Activated CD4-positive, alpha-beta T cell treated with anti-CD3 and anti-CD28 coated beads for 36 hours (primary cell): ENCODE measurements at regions of chr2 and their contacts with region 1.

Region 1: DNA sequence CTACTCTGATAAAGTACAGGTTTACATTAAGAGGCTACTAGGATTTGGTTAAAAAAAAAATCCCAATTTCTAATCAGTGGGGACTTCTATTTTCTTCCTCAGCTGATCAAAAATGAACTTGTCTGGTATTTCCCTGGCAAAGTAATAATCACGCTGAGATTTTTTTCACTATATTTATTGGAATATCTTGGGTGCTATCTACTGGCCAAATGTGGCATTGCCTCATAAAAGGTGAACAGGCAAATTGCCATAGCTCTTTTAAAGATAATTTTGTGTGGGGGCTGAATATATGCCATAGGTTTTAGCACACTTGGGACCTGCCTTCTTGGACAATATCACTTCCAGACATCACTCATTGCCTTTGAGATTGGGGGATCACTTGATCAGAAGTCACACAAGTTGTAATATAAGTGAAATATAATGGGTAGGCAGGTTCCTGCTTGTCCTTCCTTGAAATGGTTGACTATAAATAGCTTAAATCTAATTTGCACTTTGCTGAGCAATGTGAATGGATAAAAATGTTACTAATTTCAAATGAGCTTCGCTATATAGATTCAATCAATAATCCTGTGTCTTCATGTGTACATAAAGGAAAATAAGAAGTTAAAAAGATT is 7.0 kb upstream of the NXPH2 start:
- DNase-seq: no peak
- ATAC-seq: no peak
- H3K4me3 Mint-ChIP-seq: no peak overlapping the region
- H3K27ac Mint-ChIP-seq: no peak overlapping the region
- H3K4me1 Mint-ChIP-seq: no peaks in the 10 kb centered on the region
- H3K27me3 Mint-ChIP-seq: peaks cover 20% of the 10 kb centered on the region

Region 2: DNA sequence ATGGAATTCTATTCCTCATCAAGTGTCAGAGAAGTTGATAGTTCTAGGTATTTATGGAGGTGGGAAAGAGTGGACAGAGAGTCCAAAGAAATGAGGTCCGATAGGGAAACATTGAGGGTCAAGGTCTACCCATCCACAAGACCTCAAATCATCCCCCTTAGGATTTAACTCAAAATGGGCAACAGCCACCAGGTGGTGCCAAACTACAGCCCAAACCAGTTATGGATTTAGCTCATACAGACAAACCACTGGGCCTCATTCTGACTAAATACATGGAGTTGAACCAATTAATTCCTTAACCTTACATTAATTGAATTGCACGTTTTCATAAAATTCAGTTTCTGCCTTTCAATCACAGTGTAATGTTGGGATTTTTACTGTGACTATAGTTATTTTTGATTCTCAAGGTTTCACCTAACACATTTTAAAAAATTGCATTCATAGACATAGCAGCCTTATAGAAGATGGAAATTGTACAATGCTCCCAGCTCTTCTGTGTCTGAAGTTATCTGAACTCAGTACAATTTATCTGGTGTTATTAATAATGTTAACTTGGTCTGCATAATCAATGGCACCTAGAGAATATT is 921.1 kb before region 1 on chr2:
- CTCF ChIA-PET with region 1: interaction called, 21 read pairs
- POLR2A ChIA-PET with region 1: no interaction called
- intact Hi-C with region 1: loop called (anchors 1 to 5 kb)
- DNase-seq: peak; percentile 72
- ATAC-seq: peak; percentile 42
- H3K4me3 Mint-ChIP-seq: no peak overlapping the region
- H3K27ac Mint-ChIP-seq: no peak overlapping the region
- H3K4me1 Mint-ChIP-seq: no peaks in the 10 kb centered on the region
- H3K27me3 Mint-ChIP-seq: peaks cover 4% of the 10 kb centered on the region

Region 3: DNA sequence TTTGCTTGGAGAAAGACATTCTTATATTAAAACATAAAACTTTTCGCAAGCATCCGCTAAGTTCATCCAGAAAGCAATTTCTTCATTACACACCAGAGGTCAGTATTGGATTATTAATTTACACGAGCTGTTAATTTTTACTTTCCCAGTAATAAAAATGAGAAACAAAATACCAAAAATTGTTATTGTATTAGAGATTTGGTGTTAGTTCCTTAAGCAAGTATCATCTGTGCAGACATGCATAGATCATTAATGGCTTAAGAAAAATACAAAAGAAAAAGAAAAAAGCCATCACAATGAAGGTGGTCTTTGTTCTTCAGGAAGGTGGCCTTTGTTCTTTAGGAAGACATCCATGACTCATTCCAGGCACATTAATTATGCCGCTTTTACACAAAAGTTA is 876.5 kb before region 1 on chr2:
- CTCF ChIA-PET with region 1: interaction called, 3 read pairs
- POLR2A ChIA-PET with region 1: no interaction called
- intact Hi-C with region 1: loop called in 1 of 2 experiments (anchors 10 kb)
- DNase-seq: no peak
- ATAC-seq: no peak
- H3K4me3 Mint-ChIP-seq: no peak overlapping the region
- H3K27ac Mint-ChIP-seq: no peak overlapping the region
- H3K4me1 Mint-ChIP-seq: no peaks in the 10 kb centered on the region
- H3K27me3 Mint-ChIP-seq: peaks cover 2% of the 10 kb centered on the region

Region 4: GRCh38 chr2:137947728-137948336 is 839.3 kb before region 1 on chr2:
- CTCF ChIA-PET with region 1: interaction called, 4 read pairs
- POLR2A ChIA-PET with region 1: no interaction called
- intact Hi-C with region 1: loop called in 1 of 2 experiments (anchors 5 kb)
- DNase-seq: peak; percentile 61
- ATAC-seq: no peak
- H3K4me3 Mint-ChIP-seq: no peak overlapping the region
- H3K27ac Mint-ChIP-seq: no peak overlapping the region
- H3K4me1 Mint-ChIP-seq: peaks cover 3% of the 10 kb centered on the region
- H3K27me3 Mint-ChIP-seq: peaks cover 2% of the 10 kb centered on the region

Region 5: DNA sequence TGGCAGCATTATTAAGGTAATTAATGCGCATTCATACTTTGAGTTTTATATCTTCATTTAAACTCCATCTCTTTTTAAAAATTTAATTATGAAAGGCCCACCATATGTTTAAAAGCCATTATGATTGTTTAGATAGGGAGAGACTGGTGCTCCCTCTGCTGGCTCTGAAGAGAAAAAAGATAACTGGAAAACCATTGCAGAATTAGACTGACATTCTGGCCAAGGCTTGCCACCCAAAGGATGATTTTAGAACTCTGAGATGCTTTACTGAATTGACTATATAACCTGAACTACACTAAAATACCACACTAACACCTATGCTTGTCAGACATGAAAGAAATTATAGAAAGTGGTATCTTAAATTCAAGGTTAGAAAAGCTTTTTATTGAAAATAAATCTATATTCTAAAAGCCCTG is 413.2 kb before region 1 on chr2:
- CTCF ChIA-PET with region 1: no interaction called
- POLR2A ChIA-PET with region 1: no interaction called
- intact Hi-C with region 1: loop called in 1 of 2 experiments (anchors 5 kb)
- DNase-seq: peak; percentile 12
- ATAC-seq: no peak
- H3K4me3 Mint-ChIP-seq: no peak overlapping the region
- H3K27ac Mint-ChIP-seq: no peak overlapping the region
- H3K4me1 Mint-ChIP-seq: no peaks in the 10 kb centered on the region
- H3K27me3 Mint-ChIP-seq: no peaks in the 10 kb centered on the region